ENCODE measurements at regions of chr11 and their contacts with region 1.

Region 1: GRCh38 chr11:72598906-72599305 is 75.3 kb downstream of the PDE2A start:
- DNase-seq: peak in 1 of 2 donors; percentile 36
- H3K4me3 ChIP-seq: no peak overlapping the region
- H3K27ac ChIP-seq: no peak overlapping the region
- H3K4me1 ChIP-seq: no peaks in the 10 kb centered on the region
- H3K27me3 ChIP-seq: peaks cover 0 to 5% of the 10 kb centered on the region in 2 donors
- CTCF ChIP-seq: peak; percentile 45 to 53

Region 2: GRCh38 chr11:72642884-72643511 is 44.1 kb after region 1 on chr11:
- intact Hi-C with region 1: loop called (anchors 5 kb)
- DNase-seq: peak; percentile 39 to 79
- H3K4me3 ChIP-seq: peak overlapping the region; percentile 51 to 67
- H3K27ac ChIP-seq: peak overlapping the region; percentile 58 to 65
- H3K4me1 ChIP-seq: peaks cover 0 to 24% (median 18%) of the 10 kb centered on the region in 4 donors
- H3K27me3 ChIP-seq: peaks cover 0 to 33% of the 10 kb centered on the region in 2 donors
- CTCF ChIP-seq: peak; percentile 95 to 96

Measured in tibial artery (tissue), 4 donors.